Activated CD4-positive, alpha-beta T cell treated with anti-CD3 and anti-CD28 coated beads, Interleukin-2, amount 10 ng/mL, durations not matched to agents 24 days and 14 days (primary cell): ENCODE measurements at regions of chr15 and their contacts with region 1.

Region 1: DNA sequence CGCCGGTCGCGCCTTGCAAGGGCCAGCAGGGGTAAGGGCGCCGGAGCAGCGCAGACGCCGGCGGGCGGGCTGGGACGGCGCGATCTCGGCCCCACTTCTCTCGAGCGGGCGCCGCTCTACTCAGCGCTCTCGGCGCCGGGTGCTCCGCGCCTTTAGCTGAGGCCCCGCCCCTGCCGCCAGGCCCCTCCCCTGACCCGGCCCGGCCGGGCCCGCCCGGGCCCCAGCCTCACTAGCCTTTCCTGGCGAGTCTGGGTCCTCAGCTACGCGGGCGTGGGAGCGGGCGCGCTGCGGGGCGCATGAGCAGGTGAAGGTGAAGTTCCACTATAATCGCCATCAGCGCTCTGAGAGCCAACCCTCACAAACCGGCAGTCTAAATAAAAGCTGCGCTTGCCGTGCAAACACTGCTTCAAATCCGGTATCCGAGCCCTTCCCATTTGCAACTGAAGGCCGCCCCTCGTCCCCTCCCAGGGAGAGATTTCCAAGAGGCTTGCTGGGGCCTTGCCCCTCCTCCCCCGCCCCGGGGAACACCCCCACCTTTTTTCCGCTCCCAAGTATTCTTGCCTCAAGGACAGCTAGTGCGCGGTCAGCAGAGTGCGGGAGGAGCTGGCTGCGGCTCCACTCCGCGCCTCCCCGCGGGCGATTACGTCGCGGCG is at the start of gene RPP25:
- DNase-seq: peak; percentile 93
- H3K4me3 Mint-ChIP-seq: peak within 1 kb of the TSS; percentile 74
- H3K27ac Mint-ChIP-seq: no peak within 1 kb of the TSS
- H3K4me1 Mint-ChIP-seq: peaks cover 32% of the 10 kb centered on the region
- H3K27me3 Mint-ChIP-seq: peaks cover 36% of the 10 kb centered on the region
- total RNA-seq, gene RPP25: 13.1 and 13.9 TPM in 2 replicates

Region 2: DNA sequence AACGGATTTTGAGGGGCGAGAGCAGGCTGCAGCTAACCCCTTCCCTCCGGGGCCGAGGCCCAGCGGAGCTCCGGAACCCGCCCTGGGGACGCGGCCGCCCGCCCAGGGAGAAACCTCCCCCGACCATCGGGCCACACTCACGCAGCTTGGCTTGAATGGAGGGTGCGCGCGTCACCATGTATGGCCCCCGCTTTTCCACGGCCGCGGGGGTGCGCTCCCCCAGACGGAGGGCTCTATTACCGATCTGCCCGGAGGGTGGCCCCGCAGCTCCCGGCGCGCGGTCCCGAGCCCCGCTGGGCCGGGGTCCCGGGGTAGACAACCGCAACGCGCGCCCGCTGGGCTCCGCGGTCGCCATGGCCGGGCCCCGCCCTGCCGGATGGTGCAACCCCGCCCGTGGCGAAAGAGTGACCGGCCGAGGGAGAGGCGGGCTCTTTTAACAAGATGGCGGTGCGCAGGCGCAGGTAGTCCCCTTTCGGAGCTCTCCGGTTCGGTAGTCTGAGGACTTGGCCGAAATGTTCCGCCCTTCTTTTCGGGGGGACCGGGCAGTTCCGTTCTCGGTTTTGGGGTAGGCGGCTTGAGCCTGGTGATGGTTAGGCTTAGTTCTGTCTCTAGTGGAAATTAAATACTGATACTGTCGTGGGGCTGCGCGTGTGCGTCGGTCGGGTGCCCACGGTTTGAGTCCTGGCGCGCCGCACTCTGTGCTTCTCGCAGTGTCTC is 50.2 kb before region 1 on chr15 and contains the start of gene FAM219B:
- intact Hi-C with region 1: loop called (anchors 5 kb)
- DNase-seq: peak; percentile 95
- H3K4me3 Mint-ChIP-seq: peak within 1 kb of the TSS; percentile 97
- H3K27ac Mint-ChIP-seq: peak within 1 kb of the TSS; percentile 93
- H3K4me1 Mint-ChIP-seq: peaks cover 35% of the 10 kb centered on the region
- H3K27me3 Mint-ChIP-seq: no peaks in the 10 kb centered on the region
- total RNA-seq, gene FAM219B: 68.0 and 82.0 TPM in 2 replicates

Region 3: GRCh38 chr15:74978503-74978902 is 21.7 kb after region 1 on chr15:
- intact Hi-C with region 1: loop called (anchors 1 kb)
- DNase-seq: no peak
- H3K4me3 Mint-ChIP-seq: no peak overlapping the region
- H3K27ac Mint-ChIP-seq: no peak overlapping the region
- H3K4me1 Mint-ChIP-seq: peaks cover 13% of the 10 kb centered on the region
- H3K27me3 Mint-ChIP-seq: peaks cover 8% of the 10 kb centered on the region

Region 4: DNA sequence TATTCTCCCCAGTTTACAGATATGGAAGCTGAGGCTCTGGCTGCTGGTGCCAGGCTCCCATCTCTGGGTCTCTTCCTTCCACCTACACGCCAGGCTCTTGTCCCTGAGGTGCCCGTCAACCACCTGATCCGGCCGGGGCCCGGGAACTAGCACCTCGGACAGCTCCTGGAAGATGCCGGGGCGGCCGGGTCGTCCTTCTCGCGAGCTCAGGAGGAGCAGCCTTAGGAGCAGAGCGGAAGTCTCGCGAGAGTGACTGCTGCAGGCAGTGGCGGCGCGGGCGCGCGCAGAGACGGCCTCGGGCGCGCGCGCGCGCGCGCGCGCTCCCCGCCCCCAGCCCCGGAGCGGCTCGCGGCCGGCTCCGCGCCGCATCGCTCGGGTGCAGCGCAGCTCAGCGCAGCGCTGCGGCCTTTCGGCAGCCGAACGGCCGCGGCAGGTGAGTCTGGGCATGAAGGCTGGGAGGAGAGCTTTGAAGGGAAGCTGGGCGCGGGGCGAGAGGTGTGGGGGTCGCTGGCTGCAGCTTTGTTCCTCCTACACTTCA is 38.5 kb after region 1 on chr15 and contains the start of gene SCAMP5:
- intact Hi-C with region 1: loop called (anchors 2 kb)
- DNase-seq: peak; percentile 99
- H3K4me3 Mint-ChIP-seq: peak within 1 kb of the TSS; percentile 61
- H3K27ac Mint-ChIP-seq: peak within 1 kb of the TSS; percentile 16
- H3K4me1 Mint-ChIP-seq: peaks cover 13% of the 10 kb centered on the region
- H3K27me3 Mint-ChIP-seq: peaks cover 41% of the 10 kb centered on the region
- total RNA-seq, gene SCAMP5: 0.92 and 1.3 TPM in 2 replicates

Region 5: DNA sequence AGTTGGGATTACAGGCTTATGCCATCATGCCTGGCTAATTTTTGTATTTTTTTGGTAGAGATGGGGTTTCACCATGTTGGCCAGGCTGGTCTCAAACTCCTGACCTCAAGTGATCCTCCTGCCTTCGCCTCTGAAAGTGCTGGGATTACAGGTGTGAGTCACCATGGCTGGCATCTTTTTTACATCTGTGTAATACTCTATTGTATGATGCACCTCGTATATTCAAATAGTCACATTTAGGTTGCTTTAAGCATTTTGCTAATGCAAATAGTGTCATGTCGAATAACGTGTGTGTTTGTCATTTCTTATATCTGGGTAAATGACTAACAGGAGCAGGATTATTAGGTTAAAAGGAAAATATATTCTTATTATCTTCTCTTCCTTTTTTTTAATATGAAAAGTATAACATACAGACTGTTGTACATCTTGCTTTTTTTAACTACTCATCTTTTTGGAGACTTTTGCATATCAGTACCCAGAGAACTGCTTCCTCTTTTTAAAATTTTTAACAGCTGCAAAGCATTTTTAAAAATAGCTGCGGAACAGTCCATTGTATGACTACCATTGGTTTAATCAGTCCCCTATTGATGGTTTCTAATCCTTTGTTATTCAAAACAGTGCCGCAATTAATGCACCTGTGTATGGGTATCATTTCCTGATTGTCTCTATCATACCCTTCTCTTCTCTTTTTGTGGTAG is 52.0 kb after region 1 on chr15:
- intact Hi-C with region 1: no loop called
- DNase-seq: no peak
- H3K4me3 Mint-ChIP-seq: no peak overlapping the region
- H3K27ac Mint-ChIP-seq: no peak overlapping the region
- H3K4me1 Mint-ChIP-seq: peaks cover 6% of the 10 kb centered on the region
- H3K27me3 Mint-ChIP-seq: peaks cover 23% of the 10 kb centered on the region